GM10248 (cell line): ENCODE measurements at regions of chr14 and their contacts with region 1.

Region 1: GRCh38 chr14:78432046-78432445 is 261.9 kb downstream of the NRXN3 start:
- DNase-seq: no peak
- CTCF ChIP-seq: no peak

Region 2: DNA sequence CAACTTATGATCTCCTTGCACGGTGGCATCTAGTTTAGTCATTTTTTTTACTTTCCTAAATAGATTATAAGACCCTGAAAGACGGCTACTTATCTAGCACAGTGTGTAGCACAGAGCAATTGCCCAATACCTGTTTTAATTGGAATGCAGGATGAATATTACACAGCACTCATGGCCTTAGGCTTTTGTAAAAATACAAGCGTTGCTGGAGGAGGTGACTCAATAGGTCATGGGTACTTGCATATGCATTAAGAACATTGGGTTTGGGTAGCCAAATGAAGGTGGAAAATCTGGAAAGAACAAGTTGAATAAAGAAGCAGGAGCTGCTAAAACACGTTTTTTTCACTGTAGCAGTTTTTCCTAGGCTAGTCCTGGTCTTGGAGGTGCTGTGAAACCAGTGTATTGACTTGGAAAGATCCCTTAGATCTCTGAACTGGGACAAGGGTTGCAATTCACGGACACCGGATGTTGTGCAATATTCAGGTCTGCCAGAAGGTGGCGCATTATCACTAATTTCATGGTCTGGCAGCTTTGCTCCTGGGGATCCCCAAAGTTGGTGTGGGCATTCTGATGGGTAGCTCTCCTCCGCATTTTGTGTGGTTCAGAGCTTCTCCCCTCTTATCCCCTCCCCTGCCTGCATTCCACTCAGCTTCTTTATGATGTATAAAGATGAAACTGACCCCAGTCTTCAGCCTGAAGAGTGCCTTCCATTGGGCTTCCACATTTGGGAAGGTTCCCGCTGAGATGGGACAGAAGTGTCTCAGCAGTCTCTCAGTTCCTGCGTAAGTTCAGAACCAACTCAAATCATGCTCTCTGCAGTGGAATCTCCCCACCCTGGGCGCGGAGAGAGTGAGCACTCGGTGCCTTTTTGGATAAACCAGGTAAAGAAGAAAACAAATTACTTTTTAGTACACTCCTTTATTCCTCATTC is 16.4 kb after region 1 on chr14:
- CTCF ChIA-PET with region 1: interaction called, 10 read pairs
- POLR2A ChIA-PET with region 1: no interaction called
- DNase-seq: peak; percentile 67
- CTCF ChIP-seq: peak; percentile 66